Adrenal gland (tissue), 19 donors: ENCODE measurements at regions of chr2 and their contacts with region 1.

Region 1: DNA sequence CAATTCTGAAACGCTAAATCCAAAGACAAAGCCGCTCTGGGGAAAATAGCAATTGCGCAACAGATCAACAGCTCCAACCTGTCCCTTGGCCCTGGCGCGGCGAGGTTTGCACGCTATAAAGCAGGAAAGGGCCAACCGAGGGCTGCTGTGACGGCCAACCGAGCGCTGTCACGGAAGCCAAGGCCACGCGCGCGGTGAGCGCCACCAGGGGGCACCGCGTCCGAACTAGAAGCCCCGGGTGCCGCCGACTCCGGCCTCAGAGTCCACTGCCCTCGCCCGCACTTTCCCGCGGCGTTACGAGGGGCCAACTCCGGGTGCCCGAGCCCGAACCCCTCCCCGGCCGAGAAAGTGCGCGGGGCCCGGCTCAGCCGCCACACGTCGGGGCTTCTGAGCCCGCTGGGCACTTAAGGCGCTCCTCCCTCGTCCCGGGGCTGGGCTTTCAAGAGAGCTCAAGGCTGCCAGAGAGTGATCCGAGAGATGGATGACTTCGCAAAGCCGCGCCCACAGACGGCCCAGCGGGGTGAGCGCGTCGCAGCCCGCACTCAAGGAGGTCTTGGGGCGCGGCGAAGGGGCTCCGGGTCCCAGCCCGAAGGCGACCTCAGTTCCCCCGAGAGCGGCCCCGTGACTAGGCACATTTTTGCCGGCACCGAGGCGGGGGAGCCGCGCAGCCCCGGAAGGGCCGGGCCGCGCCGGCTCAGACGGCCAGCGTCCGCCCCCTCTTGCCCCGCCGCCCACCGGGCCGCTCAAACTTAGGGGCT is 897 bp downstream of the NFE2L2 start:
- DNase-seq: peak; percentile 98 to 99 (median 99)
- H3K4me3 ChIP-seq: peak overlapping the region; percentile 79 to 96 (median 84)
- H3K27ac ChIP-seq: peak overlapping the region; percentile 98 to 100 (median 99)
- H3K4me1 ChIP-seq: peaks cover 21 to 48% of the 10 kb centered on the region in 2 donors
- H3K27me3 ChIP-seq: no peaks in the 10 kb centered on the region
- CTCF ChIP-seq: peak; percentile 70 to 97 (median 86)
- POLR2A ChIP-seq: peak; percentile 73 to 83

Region 2: GRCh38 chr2:176544991-176545956 is 718.4 kb before region 1 on chr2:
- intact Hi-C with region 1: no loop called
- DNase-seq: no peak
- H3K4me3 ChIP-seq: no peak overlapping the region
- H3K27ac ChIP-seq: no peak overlapping the region
- H3K4me1 ChIP-seq: no peaks in the 10 kb centered on the region
- H3K27me3 ChIP-seq: no peaks in the 10 kb centered on the region
- CTCF ChIP-seq: no peak
- POLR2A ChIP-seq: no peak

Region 3: DNA sequence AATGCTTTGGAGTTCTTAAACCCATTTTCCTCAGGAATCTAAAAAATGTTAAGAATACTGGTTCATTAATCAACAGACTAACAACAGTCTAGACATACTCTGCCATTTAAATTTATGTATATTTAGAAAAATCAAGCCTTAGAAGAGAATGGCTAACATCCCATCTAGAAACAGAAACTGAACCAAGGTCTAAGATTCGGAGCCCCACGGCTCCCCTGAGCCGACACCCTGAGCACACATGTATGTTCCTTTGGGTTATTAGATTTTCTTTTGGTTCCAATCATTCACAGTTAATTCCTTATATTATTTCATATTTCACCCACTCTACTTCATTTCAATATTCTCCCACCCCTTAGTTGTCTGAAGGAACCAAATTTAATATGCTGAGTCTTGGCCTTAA is 145.9 kb before region 1 on chr2:
- intact Hi-C with region 1: no loop called
- DNase-seq: no peak
- H3K4me3 ChIP-seq: no peak overlapping the region
- H3K27ac ChIP-seq: no peak overlapping the region
- H3K4me1 ChIP-seq: no peaks in the 10 kb centered on the region
- H3K27me3 ChIP-seq: no peaks in the 10 kb centered on the region
- CTCF ChIP-seq: no peak
- POLR2A ChIP-seq: no peak

Region 4: GRCh38 chr2:177187631-177188312 is 75.9 kb before region 1 on chr2:
- intact Hi-C with region 1: no loop called
- DNase-seq: no peak
- H3K4me3 ChIP-seq: no peak overlapping the region
- H3K27ac ChIP-seq: no peak overlapping the region
- H3K4me1 ChIP-seq: no peaks in the 10 kb centered on the region
- H3K27me3 ChIP-seq: no peaks in the 10 kb centered on the region
- CTCF ChIP-seq: no peak
- POLR2A ChIP-seq: no peak

Region 5: GRCh38 chr2:177217247-177217843 is 46.3 kb before region 1 on chr2:
- intact Hi-C with region 1: loop called (anchors 5 kb)
- DNase-seq: no peak
- H3K4me3 ChIP-seq: no peak overlapping the region
- H3K27ac ChIP-seq: no peak overlapping the region
- H3K4me1 ChIP-seq: peaks cover 29 to 47% of the 10 kb centered on the region in 2 donors
- H3K27me3 ChIP-seq: no peaks in the 10 kb centered on the region
- CTCF ChIP-seq: no peak
- POLR2A ChIP-seq: no peak

Region 6: GRCh38 chr2:177325270-177325929 is 61.8 kb after region 1 on chr2:
- intact Hi-C with region 1: loop called in 1 of 2 experiments (anchors 10 kb)
- DNase-seq: no peak
- H3K4me3 ChIP-seq: no peak overlapping the region
- H3K27ac ChIP-seq: no peak overlapping the region
- H3K4me1 ChIP-seq: no peaks in the 10 kb centered on the region
- H3K27me3 ChIP-seq: no peaks in the 10 kb centered on the region
- CTCF ChIP-seq: no peak
- POLR2A ChIP-seq: no peak